Activated naive CD4-positive, alpha-beta T cell treated with anti-CD3 and anti-CD28 coated beads for 36 hours (primary cell): ENCODE measurements at regions of chr13 and their contacts with region 1.

Region 1: DNA sequence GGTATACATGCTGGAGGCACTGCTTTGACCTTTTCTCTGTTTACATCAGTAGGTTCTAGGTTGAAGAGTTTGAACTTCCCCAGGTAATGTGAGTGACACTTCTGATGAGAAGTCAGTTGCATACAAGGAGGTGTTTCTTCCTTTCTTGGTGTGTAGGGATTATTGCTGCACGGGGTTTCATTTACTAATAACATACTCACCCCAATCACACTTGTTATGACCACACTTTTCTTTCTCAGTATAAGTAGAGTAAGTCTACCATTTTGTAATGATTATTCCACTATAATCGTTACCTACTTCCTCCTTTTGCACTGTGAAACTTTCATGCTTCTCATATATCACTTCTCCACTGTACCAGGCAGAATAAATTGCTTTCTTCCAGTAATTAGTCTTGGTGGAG is 138.0 kb downstream of the TNFSF13B start:
- DNase-seq: no peak
- H3K4me3 Mint-ChIP-seq: no peak overlapping the region
- H3K27ac Mint-ChIP-seq: no peak overlapping the region
- H3K4me1 Mint-ChIP-seq: peaks cover 45% of the 10 kb centered on the region
- H3K27me3 Mint-ChIP-seq: no peaks in the 10 kb centered on the region

Region 2: DNA sequence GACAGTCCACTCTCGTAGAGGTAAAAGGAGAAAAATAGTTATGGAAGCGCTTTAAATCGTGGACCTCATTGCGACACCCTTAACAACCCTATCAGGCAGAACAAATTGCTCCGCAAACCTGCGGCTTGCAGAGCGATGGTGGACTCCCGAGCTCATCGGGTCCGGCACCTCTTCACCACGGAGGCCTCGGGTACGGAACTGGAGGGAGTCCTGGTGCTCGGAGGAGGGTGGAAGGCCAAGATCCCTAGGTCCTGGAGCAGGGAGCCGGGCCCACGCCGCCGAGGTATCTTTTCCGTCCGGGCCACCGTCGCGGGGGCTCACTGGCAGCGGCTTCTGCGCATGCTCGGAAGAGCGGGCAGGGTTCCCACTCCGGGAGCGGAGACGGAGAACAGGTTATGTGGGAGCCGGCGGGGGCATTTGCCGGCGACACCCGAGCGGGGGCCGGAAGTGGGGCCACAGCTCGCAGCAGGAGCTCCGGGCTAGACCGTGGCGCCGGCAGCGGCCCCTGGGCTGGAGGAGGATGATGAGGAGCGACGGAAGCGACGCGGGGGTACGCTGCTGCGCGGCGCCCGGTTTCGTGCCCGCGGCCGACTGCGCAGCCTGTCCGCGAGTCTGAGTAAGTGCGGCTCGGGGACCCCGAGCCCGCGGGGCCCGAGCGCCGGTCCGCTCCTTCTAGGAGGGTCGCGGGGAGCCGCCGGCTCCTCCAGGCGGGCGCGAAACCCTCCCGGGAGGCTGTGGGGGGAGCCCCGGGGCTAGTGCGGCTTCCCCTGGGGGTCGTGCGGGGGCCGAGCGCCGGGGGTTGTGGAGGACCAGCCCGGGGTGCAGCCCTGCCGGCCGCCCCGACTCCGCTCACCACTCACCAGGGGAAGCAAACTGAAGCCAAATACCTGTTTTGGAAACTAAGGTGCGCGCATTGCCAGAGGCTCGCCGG is 189.2 kb before region 1 on chr13 and contains the start of gene ABHD13:
- CTCF ChIA-PET with region 1: no interaction called
- intact Hi-C with region 1: loop called (anchors 5 kb)
- DNase-seq: peak; percentile 87
- H3K4me3 Mint-ChIP-seq: peak within 1 kb of the TSS; percentile 90
- H3K27ac Mint-ChIP-seq: peak within 1 kb of the TSS; percentile 94
- H3K4me1 Mint-ChIP-seq: peaks cover 48% of the 10 kb centered on the region
- H3K27me3 Mint-ChIP-seq: no peaks in the 10 kb centered on the region
- total RNA-seq, gene ABHD13: 3.4 to 3.8 TPM

Region 3: GRCh38 chr13:108419768-108420167 is 12.3 kb after region 1 on chr13:
- CTCF ChIA-PET with region 1: no interaction called
- intact Hi-C with region 1: loop called (anchors 1 kb)
- DNase-seq: no peak
- H3K4me3 Mint-ChIP-seq: no peak overlapping the region
- H3K27ac Mint-ChIP-seq: no peak overlapping the region
- H3K4me1 Mint-ChIP-seq: peaks cover 13% of the 10 kb centered on the region
- H3K27me3 Mint-ChIP-seq: no peaks in the 10 kb centered on the region

Region 4: DNA sequence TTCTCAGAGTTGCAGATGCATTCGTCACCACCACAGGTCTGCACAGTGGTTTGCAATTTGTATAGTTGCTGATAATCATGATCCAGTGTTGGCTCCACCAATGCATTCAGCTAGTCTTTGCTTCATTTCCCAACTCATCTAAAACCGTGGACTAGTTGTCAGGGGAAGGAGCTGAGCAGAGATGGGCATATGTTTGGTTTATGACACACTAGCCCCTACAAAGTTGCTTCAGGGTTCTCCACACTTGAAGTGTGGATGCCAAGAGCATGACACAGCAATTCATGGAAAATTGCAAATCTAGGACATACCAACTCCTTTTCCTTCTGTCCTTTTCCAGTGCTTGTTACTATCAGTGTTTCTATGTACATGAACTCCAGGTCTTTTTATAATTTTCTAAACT is 30.0 kb after region 1 on chr13:
- CTCF ChIA-PET with region 1: no interaction called
- intact Hi-C with region 1: no loop called
- DNase-seq: no peak
- H3K4me3 Mint-ChIP-seq: no peak overlapping the region
- H3K27ac Mint-ChIP-seq: no peak overlapping the region
- H3K4me1 Mint-ChIP-seq: no peaks in the 10 kb centered on the region
- H3K27me3 Mint-ChIP-seq: no peaks in the 10 kb centered on the region

Region 5: DNA sequence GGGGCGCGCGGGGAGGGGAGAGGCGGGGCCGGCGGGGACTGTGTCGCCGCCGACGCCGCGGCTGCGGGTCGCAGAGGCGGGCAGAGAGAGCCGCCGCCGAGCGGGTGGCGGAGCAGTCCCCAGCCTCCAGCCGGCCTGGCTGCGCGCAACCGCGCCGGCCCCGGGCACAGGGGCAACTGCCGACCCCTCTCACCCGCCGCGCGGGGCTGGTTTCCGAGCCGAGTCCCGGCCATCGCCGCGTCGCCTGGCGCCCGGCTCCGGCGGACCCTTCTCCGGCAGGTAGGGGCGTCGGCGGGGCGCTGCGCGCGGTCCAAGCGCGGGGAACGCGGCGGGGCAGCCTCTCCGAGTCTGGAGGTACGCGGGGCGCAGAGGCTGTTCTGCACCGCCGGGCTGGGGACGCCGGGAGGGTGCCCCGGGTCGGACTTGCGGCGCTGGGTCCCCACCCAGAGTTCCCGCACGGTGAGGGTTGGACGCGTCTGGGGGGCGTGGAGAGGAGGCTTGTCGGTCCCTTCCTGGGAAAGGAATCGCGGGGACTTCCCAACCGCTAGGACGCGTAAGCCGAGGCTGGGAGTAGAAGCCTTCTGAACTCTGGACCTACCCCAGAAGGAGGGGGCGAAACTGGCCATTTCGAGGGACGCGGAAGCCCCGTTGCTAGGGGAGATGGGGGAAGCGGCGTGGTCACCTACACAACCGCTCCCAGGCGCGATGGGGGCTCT is 88.3 kb after region 1 on chr13:
- CTCF ChIA-PET with region 1: interaction called, 11 read pairs
- intact Hi-C with region 1: no loop called
- DNase-seq: no peak
- H3K4me3 Mint-ChIP-seq: peak overlapping the region; percentile 71
- H3K27ac Mint-ChIP-seq: no peak overlapping the region
- H3K4me1 Mint-ChIP-seq: peaks cover 13% of the 10 kb centered on the region
- H3K27me3 Mint-ChIP-seq: peaks cover 40% of the 10 kb centered on the region

Region 6: DNA sequence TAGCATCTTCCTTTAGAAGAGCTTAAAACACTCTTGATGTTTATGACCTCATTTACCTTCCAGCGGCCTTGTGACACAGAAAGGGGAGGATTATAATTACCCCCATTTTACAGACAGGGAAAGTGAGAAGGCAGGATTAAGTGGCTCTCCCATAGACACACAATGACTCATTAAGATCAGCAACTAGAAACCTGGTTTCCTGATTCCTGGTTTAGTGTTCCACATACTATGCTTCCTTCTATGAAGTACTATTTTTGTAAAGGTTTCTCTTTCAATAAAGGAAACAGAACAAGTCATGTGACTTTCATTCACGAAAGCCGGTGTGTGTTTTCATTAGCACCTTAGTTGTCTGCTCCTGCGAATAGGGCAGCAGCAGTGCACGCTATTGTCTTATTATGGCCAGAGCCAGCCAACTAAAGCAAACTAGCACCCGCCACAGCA is 1370.6 kb after region 1 on chr13:
- CTCF ChIA-PET with region 1: no interaction called
- intact Hi-C with region 1: loop called (anchors 5 kb)
- DNase-seq: peak; percentile 21
- H3K4me3 Mint-ChIP-seq: peak overlapping the region; percentile 27
- H3K27ac Mint-ChIP-seq: peak overlapping the region; percentile 24
- H3K4me1 Mint-ChIP-seq: peaks cover 59% of the 10 kb centered on the region
- H3K27me3 Mint-ChIP-seq: no peaks in the 10 kb centered on the region